AG04449 (cell line): ENCODE measurements at regions of chr12 and their contacts with region 1.

Region 1: DNA sequence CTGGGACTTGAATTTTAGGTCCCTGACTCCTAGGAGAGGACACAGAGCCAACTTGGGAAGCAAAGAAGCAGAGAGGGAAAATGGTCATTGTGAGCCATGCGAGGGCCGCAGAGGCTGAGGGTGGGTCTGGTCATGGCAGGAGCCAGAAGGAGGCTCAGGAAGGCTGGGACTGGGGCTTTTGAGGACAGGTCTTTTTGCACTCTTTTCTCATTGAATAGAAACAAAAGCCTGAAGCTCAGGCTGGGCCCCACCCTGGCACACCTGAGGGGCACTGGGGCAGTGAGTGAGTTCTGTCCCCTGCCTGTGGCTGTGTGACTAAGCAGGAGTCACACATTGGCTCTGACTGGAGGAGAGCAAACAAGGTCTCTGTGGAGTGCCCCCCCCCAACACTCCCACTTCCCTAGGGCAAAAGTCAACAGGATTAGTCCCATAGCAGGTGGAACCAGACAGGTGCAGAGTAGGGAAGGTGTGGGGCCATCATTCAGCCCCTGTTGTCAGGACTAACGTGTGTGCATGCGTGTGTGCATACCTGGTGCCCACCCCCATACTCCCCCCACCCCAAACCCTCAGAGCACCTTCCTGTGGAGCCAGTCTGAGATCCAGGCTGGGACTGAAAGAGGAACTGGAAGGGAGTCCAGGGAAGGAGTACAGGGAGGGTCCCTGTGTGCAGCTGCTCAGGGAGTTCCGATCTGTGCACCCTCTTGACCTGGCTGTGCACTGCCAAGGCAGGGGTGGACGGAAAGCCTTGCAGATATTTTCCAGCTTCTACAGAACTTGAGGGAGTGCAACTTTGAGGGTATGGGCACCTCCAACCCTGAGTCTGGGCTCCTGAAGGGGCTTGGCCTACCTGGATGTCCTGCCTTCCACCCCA is 3.0 kb downstream of the KRT7 start:
- DNase-seq: no peak
- H3K4me3 ChIP-seq: no peak overlapping the region
- CTCF ChIP-seq: no peak

Region 2: DNA sequence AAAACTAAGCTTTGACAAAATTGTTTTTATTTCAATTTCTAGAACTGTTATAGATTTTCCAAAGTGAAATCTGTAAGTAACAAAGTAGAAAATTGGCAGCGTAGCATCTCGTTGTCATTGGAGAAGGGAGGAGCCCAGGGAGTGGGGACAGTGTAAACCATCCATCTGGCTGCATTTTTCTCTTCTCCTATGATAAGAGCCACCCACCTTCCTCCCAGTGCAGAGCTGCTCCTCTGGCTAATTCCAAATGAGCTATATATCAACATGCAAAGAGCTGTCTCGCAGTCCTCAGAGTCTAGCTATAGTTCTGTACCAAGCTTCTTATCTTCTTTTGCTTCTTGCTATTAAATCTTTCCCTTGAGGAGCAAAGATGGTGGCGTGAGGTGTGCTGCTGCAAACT is 588.4 kb before region 1 on chr12:
- CTCF ChIA-PET with region 1: no interaction called
- POLR2A ChIA-PET with region 1: no interaction called
- DNase-seq: no peak
- H3K4me3 ChIP-seq: no peak overlapping the region
- CTCF ChIP-seq: no peak

Region 3: DNA sequence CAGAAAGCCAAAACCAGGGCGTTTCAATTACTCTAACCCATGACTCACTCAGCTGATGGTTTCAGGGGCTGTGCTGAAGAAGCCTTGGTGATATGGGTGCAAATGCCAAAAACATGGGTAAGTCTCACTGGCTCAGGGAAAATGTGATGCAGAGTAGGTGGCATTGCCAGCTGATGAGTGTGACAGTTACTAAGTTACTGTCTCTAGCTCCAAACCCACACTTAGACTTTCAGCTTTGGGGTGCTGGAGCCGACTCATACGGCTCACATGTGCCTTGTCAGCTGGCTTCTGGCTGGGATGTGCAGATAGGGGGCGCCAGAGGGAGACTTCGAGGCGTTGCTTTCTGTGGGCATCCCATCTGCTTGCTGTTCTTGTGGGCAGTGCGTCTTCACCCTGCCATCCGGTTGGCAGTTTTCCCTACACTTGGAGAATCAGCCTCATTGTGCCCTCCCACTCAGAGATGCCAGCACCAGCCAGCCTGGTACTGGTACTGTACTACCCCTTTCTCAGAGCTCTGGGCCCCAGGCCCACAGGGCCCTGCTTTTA is 14.1 kb before region 1 on chr12:
- CTCF ChIA-PET with region 1: interaction called, 12 read pairs
- POLR2A ChIA-PET with region 1: no interaction called
- DNase-seq: no peak
- H3K4me3 ChIP-seq: no peak overlapping the region
- CTCF ChIP-seq: peak; percentile 46